Dendritic cell treated with granulocyte-macrophage colony-stimulating factor and Interleukin-4, amounts not matched to agents 40 ng/mL and 50 ng/mL, for 4 days (primary cell): ENCODE measurements at regions of chr2 and their contacts with region 1.

Region 1: GRCh38 chr2:28821295-28821958 is 10.8 kb downstream of the SPDYA start:
- H3K4me3 Mint-ChIP-seq: no peak overlapping the region
- H3K27ac Mint-ChIP-seq: no peak overlapping the region
- H3K4me1 Mint-ChIP-seq: no peaks in the 10 kb centered on the region
- H3K27me3 Mint-ChIP-seq: no peaks in the 10 kb centered on the region

Region 2: GRCh38 chr2:28252311-28252710 is 569.1 kb before region 1 on chr2:
- intact Hi-C with region 1: no loop called
- H3K4me3 Mint-ChIP-seq: no peak overlapping the region
- H3K27ac Mint-ChIP-seq: no peak overlapping the region
- H3K4me1 Mint-ChIP-seq: peaks cover 1% of the 10 kb centered on the region
- H3K27me3 Mint-ChIP-seq: no peaks in the 10 kb centered on the region

Region 3: GRCh38 chr2:29196792-29197788 is 375.7 kb after region 1 on chr2:
- intact Hi-C with region 1: loop called (anchors 10 kb)
- H3K4me3 Mint-ChIP-seq: no peak overlapping the region
- H3K27ac Mint-ChIP-seq: no peak overlapping the region
- H3K4me1 Mint-ChIP-seq: peaks cover 16% of the 10 kb centered on the region
- H3K27me3 Mint-ChIP-seq: peaks cover 2% of the 10 kb centered on the region

Region 4: DNA sequence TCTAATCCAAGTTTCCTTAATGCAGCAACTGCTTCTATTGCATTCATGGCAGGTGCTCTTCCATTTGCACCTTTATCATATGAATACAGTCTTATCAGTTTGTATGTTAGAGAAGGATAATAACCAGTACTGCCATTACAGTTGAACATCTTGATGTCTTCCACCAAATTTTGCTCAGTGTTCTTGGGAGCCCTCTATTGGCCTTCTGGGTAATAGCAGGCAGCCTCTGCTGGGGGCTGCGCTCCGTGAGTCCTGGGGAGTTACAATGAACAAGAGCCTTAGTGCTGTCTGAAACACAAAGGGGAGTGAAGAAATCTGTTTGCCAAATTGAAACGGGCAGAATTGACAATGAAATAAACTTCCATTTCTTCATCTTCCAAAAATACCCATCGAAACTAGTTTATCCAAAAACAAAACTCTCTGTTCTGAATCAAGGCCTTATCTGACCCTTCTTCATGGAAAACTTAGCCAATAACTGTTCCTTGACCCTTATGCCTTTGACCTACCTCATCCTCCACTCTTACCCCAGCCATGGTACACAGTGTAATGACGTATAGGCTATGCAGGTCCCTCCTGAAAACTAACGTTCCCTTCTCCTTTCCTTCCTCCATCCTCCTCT is 1020.1 kb after region 1 on chr2:
- intact Hi-C with region 1: loop called (anchors 5 kb)
- H3K4me3 Mint-ChIP-seq: no peak overlapping the region
- H3K27ac Mint-ChIP-seq: no peak overlapping the region
- H3K4me1 Mint-ChIP-seq: no peaks in the 10 kb centered on the region
- H3K27me3 Mint-ChIP-seq: peaks cover 4% of the 10 kb centered on the region